IMR-90 (cell line): ENCODE measurements at regions of chr14 and their contacts with region 1.

Region 1: GRCh38 chr14:60184146-60184904 is 19.1 kb upstream of the DHRS7 start:
- DNase-seq: peak; percentile 77
- ATAC-seq: peak; percentile 69
- H3K4me3 ChIP-seq: peak overlapping the region; percentile 38
- H3K27ac ChIP-seq: no peak overlapping the region
- H3K4me1 ChIP-seq: no peaks in the 10 kb centered on the region
- H3K27me3 ChIP-seq: peaks cover 6% of the 10 kb centered on the region
- CTCF ChIP-seq: peak; percentile 94
- POLR2A ChIP-seq: no peak
- RAD21 ChIP-seq: peak; percentile 92

Region 2: GRCh38 chr14:59507063-59507780 is 677.1 kb before region 1 on chr14:
- CTCF ChIA-PET with region 1: no interaction called
- POLR2A ChIA-PET with region 1: no interaction called
- dilution Hi-C with region 1: no loop called
- in situ Hi-C with region 1: no loop called
- intact Hi-C with region 1: loop called (anchors 1 kb)
- DNase-seq: peak; percentile 53
- ATAC-seq: peak; percentile 98
- H3K4me3 ChIP-seq: no peak overlapping the region
- H3K27ac ChIP-seq: no peak overlapping the region
- H3K4me1 ChIP-seq: no peaks in the 10 kb centered on the region
- H3K27me3 ChIP-seq: no peaks in the 10 kb centered on the region
- CTCF ChIP-seq: peak; percentile 89
- POLR2A ChIP-seq: no peak
- RAD21 ChIP-seq: peak; percentile 81

Region 3: GRCh38 chr14:59632381-59632780 is 551.9 kb before region 1 on chr14:
- CTCF ChIA-PET with region 1: interaction called, 3 read pairs
- POLR2A ChIA-PET with region 1: no interaction called
- dilution Hi-C with region 1: no loop called
- in situ Hi-C with region 1: no loop called
- intact Hi-C with region 1: loop called (anchors 2 kb)
- DNase-seq: peak; percentile 6
- ATAC-seq: peak; percentile 46; the same call in 1 of the 2 replicates
- H3K4me3 ChIP-seq: no peak overlapping the region
- H3K27ac ChIP-seq: no peak overlapping the region
- H3K4me1 ChIP-seq: no peaks in the 10 kb centered on the region
- H3K27me3 ChIP-seq: peaks cover 11% of the 10 kb centered on the region
- CTCF ChIP-seq: peak; percentile 38
- POLR2A ChIP-seq: no peak
- RAD21 ChIP-seq: peak; percentile 53

Region 4: DNA sequence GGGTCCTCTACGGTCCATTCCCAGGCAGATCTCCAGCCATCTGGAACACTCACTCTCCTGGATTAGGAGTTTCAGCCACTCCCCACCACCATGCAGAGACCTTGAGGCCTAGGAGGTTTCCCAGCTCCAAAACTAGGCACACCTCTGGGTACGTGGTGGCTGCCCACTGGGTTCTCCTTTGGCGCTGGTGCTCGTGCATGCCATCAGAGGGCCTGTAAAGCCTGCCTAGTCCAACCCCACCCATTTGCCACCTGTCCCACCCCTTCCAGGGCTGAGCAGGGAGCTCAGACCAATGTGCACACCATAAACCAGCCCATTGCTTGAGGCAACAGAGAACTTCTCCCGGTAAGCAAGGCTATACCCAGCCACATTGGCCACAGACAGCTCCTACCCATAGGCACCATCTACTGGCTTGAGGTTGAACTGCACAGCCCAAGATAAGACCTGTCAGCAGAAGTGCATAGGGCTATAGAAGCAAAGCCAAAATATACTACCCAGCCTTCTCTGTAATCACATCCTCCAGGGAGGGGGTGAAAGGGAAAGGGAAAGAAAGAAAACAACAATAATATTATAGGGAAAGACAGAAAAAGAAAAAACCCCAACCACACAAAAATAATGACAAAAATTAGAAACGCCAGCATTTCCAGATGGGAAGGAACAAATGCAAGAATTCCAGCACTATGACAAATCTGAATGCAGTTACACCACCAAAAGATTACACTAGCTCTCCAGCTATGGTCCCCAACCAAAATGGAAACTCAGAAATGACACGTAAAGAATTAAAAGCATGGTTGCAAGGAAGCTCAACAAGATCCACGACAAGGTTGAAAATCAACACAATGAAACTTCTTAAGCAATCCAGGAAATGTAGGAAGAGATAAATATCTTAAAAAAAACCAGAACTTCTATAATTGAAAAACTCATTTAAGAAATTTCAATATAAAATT is 495.8 kb before region 1 on chr14:
- CTCF ChIA-PET with region 1: no interaction called
- POLR2A ChIA-PET with region 1: no interaction called
- dilution Hi-C with region 1: no loop called
- in situ Hi-C with region 1: no loop called
- intact Hi-C with region 1: loop called (anchors 5 kb)
- DNase-seq: peak; percentile 53
- ATAC-seq: peak; percentile 98
- H3K4me3 ChIP-seq: no peak overlapping the region
- H3K27ac ChIP-seq: no peak overlapping the region
- H3K4me1 ChIP-seq: no peaks in the 10 kb centered on the region
- H3K27me3 ChIP-seq: no peaks in the 10 kb centered on the region
- CTCF ChIP-seq: peak; percentile 56
- POLR2A ChIP-seq: no peak
- RAD21 ChIP-seq: peak; percentile 57

Region 5: DNA sequence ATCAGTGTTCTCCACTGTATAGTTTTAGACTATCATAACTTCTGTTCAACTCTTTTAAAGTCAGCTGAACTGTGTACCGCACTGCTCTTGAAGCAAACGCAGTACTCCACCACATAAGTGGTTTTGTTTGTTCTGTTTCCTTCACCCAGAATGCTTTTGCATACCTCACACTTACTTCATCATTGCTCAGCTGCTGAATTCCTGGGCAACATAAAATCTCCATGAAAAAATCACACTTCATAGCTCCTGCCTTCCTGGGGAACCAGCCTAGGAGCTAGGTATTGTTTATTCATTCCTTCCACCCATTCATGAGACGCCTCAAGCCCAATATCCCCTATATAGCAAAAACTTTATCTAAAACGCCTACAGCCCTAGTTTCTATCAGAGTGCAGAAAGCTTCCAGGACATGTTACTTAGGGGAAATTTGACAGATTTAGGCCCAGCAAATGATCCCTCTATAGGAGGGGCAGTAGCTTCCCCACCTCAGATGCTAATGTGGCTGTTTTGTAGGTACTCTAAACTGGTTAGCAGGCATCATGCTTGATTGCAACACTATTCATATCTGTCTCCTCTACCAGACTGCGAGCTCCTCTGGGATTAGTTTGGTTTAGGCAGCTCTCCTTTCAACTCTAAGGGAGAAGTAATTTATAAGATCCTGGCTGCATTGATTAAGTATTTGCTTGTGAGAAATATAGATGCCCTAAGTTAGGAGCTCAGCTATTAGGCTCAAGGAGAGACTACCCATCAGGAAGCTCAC is 219.9 kb before region 1 on chr14:
- CTCF ChIA-PET with region 1: interaction called, 28 read pairs
- POLR2A ChIA-PET with region 1: no interaction called
- dilution Hi-C with region 1: no loop called
- in situ Hi-C with region 1: loop called (anchors 5 kb)
- intact Hi-C with region 1: loop called (anchors 1 kb)
- DNase-seq: peak; percentile 31
- ATAC-seq: peak; percentile 69
- H3K4me3 ChIP-seq: no peak overlapping the region
- H3K27ac ChIP-seq: no peak overlapping the region
- H3K4me1 ChIP-seq: no peaks in the 10 kb centered on the region
- H3K27me3 ChIP-seq: no peaks in the 10 kb centered on the region
- CTCF ChIP-seq: no peak
- POLR2A ChIP-seq: no peak
- RAD21 ChIP-seq: no peak

Region 6: DNA sequence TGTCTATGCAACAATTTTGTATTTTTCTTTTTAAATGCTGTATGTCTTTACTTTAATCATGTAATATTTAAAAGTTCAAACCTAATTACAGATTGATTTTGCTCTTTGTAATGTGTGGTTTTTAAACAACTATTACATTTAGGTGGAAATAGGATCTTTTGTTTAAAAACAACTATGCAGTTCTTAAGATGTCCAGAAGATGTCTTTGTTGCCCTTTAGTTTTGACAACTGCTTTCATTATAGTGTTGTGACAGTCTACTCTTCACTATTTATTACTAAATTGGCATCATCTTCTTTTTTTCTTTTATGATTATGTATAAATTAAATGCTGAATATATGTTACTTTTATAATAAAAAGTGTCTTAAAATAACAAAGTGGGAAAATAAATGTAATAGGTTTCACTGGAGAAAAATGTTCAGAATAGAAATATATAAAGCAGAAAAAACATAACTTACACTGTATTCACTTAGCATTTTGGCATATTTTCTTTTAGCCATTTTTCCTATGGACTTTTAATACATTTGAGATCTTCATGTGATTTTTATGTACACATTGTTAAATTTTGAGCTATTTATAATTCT is 119.7 kb before region 1 on chr14:
- CTCF ChIA-PET with region 1: interaction called, 9 read pairs
- POLR2A ChIA-PET with region 1: no interaction called
- dilution Hi-C with region 1: no loop called
- in situ Hi-C with region 1: loop called (anchors 5 kb)
- intact Hi-C with region 1: loop called (anchors 1 kb)
- DNase-seq: peak; percentile 55
- ATAC-seq: peak; percentile 74
- H3K4me3 ChIP-seq: no peak overlapping the region
- H3K27ac ChIP-seq: no peak overlapping the region
- H3K4me1 ChIP-seq: no peaks in the 10 kb centered on the region
- H3K27me3 ChIP-seq: no peaks in the 10 kb centered on the region; the same call in 1 of the 2 replicates
- CTCF ChIP-seq: peak; percentile 74
- POLR2A ChIP-seq: no peak
- RAD21 ChIP-seq: peak; percentile 76

Region 7: DNA sequence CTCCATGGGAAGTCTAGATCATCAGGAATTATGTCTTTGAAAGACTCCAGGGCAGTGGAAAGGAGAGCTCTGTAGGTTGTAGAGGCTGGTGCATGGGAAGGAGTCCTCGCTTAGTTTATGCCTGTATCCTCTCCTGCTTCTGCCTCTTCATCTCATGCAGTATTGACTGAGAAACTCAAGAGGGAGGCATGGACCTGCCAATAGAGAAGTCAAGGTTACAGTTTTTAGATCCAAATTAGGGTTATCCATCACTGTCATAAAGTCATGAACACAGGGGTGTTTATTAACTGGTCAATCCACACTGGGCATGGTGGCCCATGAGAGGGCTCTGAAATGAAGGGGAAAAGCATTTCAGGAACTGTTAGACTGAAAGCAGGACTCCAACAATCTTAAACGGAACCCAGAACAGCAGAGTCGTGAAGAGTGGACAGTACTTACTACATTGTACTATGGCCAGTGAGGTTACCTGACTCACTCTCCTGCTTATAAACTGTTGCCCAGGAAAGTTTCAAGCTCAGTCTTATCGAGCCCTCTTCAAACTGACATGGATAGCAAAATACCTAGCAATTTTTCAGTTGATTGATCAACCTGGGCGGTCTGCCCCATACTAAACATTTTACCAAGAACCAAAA is 11.0 kb after region 1 on chr14:
- CTCF ChIA-PET with region 1: no interaction called
- POLR2A ChIA-PET with region 1: no interaction called
- dilution Hi-C with region 1: no loop called
- in situ Hi-C with region 1: no loop called
- intact Hi-C with region 1: no loop called
- DNase-seq: no peak
- ATAC-seq: no peak
- H3K4me3 ChIP-seq: no peak overlapping the region
- H3K27ac ChIP-seq: no peak overlapping the region
- H3K4me1 ChIP-seq: no peaks in the 10 kb centered on the region
- H3K27me3 ChIP-seq: peaks cover 5% of the 10 kb centered on the region
- CTCF ChIP-seq: no peak
- POLR2A ChIP-seq: no peak
- RAD21 ChIP-seq: no peak

Region 8: DNA sequence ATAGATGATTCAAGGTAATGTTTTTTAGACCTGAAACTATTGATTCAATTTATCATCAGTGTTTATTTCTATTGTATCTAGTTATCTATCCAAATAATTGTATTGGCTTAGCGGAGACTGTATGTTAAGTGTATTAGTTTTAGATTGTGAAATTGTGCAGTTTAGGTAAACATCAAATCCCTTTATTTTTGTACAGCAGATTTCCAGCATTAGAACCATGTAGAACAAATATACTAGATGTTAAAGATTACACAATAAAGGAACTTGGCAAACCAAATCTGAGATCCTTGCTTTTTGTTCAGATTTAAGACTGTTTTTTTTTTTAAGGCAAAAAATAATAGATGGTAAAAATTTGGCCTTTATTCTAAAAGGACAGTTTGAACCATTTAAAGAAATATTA is 104.0 kb after region 1 on chr14:
- CTCF ChIA-PET with region 1: no interaction called
- POLR2A ChIA-PET with region 1: no interaction called
- dilution Hi-C with region 1: no loop called
- in situ Hi-C with region 1: no loop called
- intact Hi-C with region 1: no loop called
- DNase-seq: no peak
- ATAC-seq: no peak
- H3K4me3 ChIP-seq: no peak overlapping the region
- H3K27ac ChIP-seq: no peak overlapping the region
- H3K4me1 ChIP-seq: no peaks in the 10 kb centered on the region
- H3K27me3 ChIP-seq: no peaks in the 10 kb centered on the region
- CTCF ChIP-seq: no peak
- POLR2A ChIP-seq: no peak
- RAD21 ChIP-seq: no peak

Region 9: DNA sequence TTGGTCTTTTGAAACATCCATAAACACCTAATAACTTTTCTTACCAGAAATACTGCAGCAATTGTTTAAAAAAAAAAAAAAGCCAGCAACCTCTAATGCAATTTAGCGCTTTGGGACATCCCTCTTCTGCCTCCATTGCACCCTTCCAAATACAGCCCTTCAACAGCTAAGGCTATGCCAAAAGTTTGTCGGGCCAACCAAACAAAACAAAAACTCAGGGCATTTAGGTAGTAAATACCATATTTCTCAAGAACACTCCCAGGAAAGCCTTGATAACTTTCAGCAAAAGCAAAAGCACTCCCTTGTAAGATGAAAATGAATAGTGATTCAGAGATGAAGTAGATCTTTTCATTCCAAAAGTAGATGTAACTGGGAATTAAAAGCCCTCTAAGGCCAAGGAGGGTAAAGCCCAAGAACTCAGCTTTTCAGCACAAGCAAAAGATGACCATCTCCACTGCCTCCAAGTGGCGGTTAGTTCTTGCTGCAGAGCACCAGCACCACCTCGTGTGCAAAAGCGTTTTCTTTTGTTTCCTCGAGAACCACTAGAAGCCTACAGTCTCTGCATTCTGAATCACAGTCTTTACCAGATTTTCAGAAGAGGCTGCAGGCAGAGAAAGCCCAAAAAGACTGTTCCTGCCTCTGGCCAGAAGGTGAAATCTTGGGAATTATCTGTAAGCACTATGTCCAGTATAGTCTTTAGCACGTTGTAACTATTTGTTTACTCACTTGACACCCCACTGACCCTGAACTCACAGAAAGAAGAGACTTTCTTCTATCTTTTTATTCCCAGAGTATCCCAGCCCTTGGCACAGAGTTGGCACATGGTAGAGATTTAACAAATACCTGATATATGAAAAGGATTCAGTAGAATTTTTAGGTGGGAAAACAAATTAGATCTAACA is 377.8 kb after region 1 on chr14:
- CTCF ChIA-PET with region 1: no interaction called
- POLR2A ChIA-PET with region 1: no interaction called
- dilution Hi-C with region 1: no loop called
- in situ Hi-C with region 1: no loop called
- intact Hi-C with region 1: loop called (anchors 2 kb)
- DNase-seq: peak; percentile 82
- ATAC-seq: peak; percentile 89
- H3K4me3 ChIP-seq: no peak overlapping the region
- H3K27ac ChIP-seq: no peak overlapping the region
- H3K4me1 ChIP-seq: 0 out of 2 replicates have a peak, but pooled peaks cover 1% of the 10 kb centered on the region
- H3K27me3 ChIP-seq: no peaks in the 10 kb centered on the region
- CTCF ChIP-seq: peak; percentile 80
- POLR2A ChIP-seq: no peak
- RAD21 ChIP-seq: peak; percentile 79